Natural killer cell (primary cell): ENCODE measurements at regions of chr19 and their contacts with region 1.

Region 1: DNA sequence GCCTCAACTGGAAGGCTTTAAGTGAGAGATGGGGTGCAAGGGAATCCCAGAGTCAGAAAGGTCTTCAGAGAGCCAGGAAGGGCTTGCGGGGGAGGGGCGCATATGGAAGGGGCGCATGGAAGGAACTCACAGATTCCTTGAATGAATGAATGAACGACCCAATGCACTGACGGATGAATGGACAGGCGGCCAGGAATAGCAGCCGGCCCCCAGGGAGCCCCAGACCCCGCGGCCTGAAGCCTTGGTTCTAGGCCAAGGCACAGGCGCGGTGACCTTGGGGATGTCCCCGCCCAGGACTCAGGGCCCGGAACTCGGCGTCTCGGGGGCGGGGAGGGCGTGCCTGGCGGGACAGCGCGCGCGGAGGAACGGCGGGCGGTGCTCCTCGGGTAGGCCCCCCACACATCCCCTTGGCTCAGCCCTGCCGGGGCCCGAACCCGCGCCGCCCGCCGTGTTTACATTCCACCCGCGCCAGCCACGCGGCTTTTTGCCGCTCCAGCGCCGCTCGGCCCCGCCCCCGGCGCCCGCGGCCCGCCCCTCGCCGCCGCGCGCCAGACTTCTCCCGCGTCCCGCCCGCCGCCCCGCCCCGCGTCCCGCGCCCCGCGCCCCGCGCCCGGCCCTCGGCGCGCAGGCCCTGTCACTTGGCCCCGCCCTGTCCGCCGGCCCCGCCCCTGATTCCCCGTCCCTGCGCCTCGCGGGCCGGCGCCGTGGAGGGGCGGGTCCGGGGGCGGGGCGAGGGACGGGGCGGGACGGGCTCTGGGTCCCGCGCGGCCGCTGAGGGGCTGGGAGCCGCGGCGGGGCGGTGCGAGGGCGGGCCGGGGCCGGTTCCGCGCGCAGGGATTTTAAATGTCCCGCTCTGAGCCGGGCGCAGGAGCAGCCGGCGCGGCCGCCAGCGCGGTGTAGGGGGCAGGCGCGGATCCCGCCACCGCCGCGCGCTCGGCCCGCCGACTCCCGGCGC is at the start of gene CCNE1:
- DNase-seq: peak; percentile 92 to 94
- ATAC-seq: peak; percentile 94 to 99 (median 96)
- H3K4me3 ChIP-seq: peak within 1 kb of the TSS; percentile 39
- H3K4me3 Mint-ChIP-seq: peak within 1 kb of the TSS; percentile 94
- H3K27ac ChIP-seq: peak within 1 kb of the TSS; percentile 24
- H3K27ac Mint-ChIP-seq: peak within 1 kb of the TSS; percentile 74 to 84
- H3K4me1 ChIP-seq: peaks cover 12% of the 10 kb centered on the region
- H3K4me1 Mint-ChIP-seq: peaks cover 5 to 13% of the 10 kb centered on the region in 2 donors
- H3K27me3 ChIP-seq: no peaks in the 10 kb centered on the region
- H3K27me3 Mint-ChIP-seq: no peaks in the 10 kb centered on the region
- CTCF ChIP-seq: no peak
- total RNA-seq, gene CCNE1: 2.6 to 6.7 (median 2.9) TPM

Region 2: GRCh38 chr19:29212648-29213573 is 598.5 kb before region 1 on chr19 and contains the start of gene UQCRFS1:
- intact Hi-C with region 1: loop called (anchors 10 kb)
- DNase-seq: peak; percentile 92 to 97
- ATAC-seq: peak; percentile 92 to 96 (median 94)
- H3K4me3 ChIP-seq: peak within 1 kb of the TSS; percentile 58
- H3K4me3 Mint-ChIP-seq: peak within 1 kb of the TSS; percentile 91
- H3K27ac ChIP-seq: peak within 1 kb of the TSS; percentile 71
- H3K27ac Mint-ChIP-seq: peak within 1 kb of the TSS; percentile 88 to 89
- H3K4me1 ChIP-seq: peaks cover 9% of the 10 kb centered on the region
- H3K4me1 Mint-ChIP-seq: peaks cover 48 to 49% of the 10 kb centered on the region in 2 donors
- H3K27me3 ChIP-seq: no peaks in the 10 kb centered on the region
- H3K27me3 Mint-ChIP-seq: peaks cover 6 to 12% of the 10 kb centered on the region in 2 donors
- CTCF ChIP-seq: no peak
- total RNA-seq, gene UQCRFS1: 21.8 to 26.8 (median 23.9) TPM

Region 3: DNA sequence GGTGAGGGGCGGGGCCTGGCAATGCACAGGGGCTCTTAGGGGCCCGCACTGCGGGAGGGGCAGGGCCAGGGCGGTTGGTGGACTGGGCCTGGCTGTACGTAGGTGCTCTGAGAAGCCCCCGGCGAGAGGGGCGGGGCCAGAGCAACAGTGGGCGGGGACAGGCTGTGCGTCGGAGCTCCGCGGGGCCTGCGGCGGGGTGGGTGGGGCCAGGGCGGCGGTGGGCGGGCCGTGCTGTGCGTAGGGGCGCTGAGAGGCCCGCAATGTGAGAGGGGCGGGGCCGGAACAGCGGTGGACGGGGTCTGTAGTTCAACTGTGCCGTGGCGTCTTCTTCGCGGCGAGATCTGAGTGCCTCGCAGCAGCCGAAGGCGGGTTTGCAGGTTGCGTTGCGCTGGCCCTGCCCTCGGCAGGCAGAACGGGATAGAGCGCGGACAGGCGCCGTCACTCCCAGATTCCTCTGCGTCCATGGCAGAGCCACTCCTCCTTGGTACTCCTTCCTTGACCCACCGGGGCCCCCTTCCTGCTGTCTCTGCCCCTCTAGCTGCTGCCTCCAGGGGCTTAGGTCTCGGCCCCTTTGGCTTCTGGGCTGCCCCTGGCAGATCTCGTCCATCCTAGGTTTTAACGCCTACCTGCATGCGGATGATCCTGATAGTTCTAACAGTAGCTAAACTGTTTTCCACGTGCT is 33.6 kb after region 1 on chr19:
- intact Hi-C with region 1: loop called (anchors 1 kb)
- DNase-seq: peak; percentile 93 to 97
- ATAC-seq: peak; percentile 77 to 90 (median 80)
- H3K4me3 ChIP-seq: peak overlapping the region; percentile 85
- H3K4me3 Mint-ChIP-seq: peak overlapping the region; percentile 96
- H3K27ac ChIP-seq: peak overlapping the region; percentile 81
- H3K27ac Mint-ChIP-seq: peak overlapping the region; percentile 89 to 91
- H3K4me1 ChIP-seq: peaks cover 24% of the 10 kb centered on the region
- H3K4me1 Mint-ChIP-seq: peaks cover 10 to 11% of the 10 kb centered on the region in 2 donors
- H3K27me3 ChIP-seq: peaks cover 11% of the 10 kb centered on the region
- H3K27me3 Mint-ChIP-seq: peaks cover 15 to 33% of the 10 kb centered on the region in 2 donors
- CTCF ChIP-seq: no peak

Region 4: DNA sequence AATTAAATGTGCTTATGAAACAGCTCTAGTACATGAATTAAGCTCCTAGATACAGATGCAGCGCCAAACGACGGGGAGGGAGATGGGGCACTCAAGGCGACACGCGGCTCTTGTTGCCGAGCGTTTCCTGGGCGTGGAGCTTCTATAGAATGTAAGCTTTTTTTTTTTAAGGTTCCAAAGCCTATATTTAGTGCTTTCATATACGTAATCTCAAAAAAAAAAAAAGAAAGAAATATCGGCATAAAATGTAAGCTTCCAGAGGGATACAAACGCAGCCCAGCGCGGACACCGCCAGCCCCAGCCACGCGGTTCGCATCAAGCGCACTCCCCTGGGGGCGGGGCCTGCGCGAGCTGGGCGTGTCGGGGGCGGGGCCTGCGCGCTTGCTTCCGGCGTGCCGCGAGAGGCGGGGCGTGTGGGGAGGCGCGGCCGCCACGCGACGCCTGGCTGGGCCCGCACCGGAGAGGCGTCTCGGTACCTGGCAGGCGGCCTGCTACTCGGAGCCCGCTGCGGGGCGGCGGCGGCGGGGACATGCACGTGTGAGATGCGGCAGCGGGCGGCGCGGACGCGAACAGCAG is 130.5 kb after region 1 on chr19 and contains the start of gene URI1:
- intact Hi-C with region 1: loop called (anchors 2 kb)
- DNase-seq: peak; percentile 93 to 97
- ATAC-seq: peak; percentile 93 to 99 (median 95)
- H3K4me3 ChIP-seq: peak within 1 kb of the TSS; percentile 90
- H3K4me3 Mint-ChIP-seq: peak within 1 kb of the TSS; percentile 94
- H3K27ac ChIP-seq: peak within 1 kb of the TSS; percentile 64
- H3K27ac Mint-ChIP-seq: peak within 1 kb of the TSS; percentile 86 to 89
- H3K4me1 ChIP-seq: peaks cover 17% of the 10 kb centered on the region
- H3K4me1 Mint-ChIP-seq: peaks cover 37 to 39% of the 10 kb centered on the region in 2 donors
- H3K27me3 ChIP-seq: no peaks in the 10 kb centered on the region
- H3K27me3 Mint-ChIP-seq: peaks cover 0 to 6% of the 10 kb centered on the region in 2 donors
- CTCF ChIP-seq: no peak
- total RNA-seq, gene URI1: 66.8 to 72.8 (median 68.4) TPM